ENCODE measurements at regions of chr15 and their contacts with region 1.

Region 1: GRCh38 chr15:65264863-65265430 is 21.7 kb downstream of the PARP16 start:
- DNase-seq: no peak
- ATAC-seq: no peak
- H3K4me3 ChIP-seq: no peak overlapping the region
- H3K4me3 Mint-ChIP-seq: no peak overlapping the region
- H3K27ac ChIP-seq: no peak overlapping the region
- H3K27ac Mint-ChIP-seq: no peak overlapping the region
- H3K4me1 ChIP-seq: no peaks in the 10 kb centered on the region
- H3K4me1 Mint-ChIP-seq: no peaks in the 10 kb centered on the region
- H3K27me3 ChIP-seq: no peaks in the 10 kb centered on the region
- H3K27me3 Mint-ChIP-seq: no peaks in the 10 kb centered on the region

Region 2: DNA sequence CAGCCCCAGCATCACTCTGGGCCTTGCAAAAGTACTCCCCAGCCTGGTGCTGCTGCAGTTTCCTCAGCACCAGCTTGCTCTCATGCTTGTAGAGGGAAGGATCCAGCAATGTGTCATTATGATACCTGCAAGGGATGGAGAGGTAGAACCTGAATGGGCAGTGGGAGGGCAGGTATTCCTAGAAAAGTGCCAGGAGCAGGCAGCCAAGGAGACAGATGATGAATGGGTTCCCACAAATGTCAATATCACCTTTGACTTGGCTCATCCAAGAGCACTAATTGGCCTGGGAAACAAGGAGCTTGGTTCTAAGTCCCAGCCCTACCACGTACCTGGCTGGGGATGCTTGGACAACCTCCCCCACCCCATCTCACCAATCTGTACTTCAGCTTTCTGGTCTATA is 63.0 kb before region 1 on chr15:
- CTCF ChIA-PET with region 1: no interaction called
- POLR2A ChIA-PET with region 1: interaction called in 1 of 2 experiments, 14 read pairs
- DNase-seq: no peak
- ATAC-seq: no peak
- H3K4me3 ChIP-seq: no peak overlapping the region
- H3K4me3 Mint-ChIP-seq: no peak overlapping the region
- H3K27ac ChIP-seq: no peak overlapping the region
- H3K27ac Mint-ChIP-seq: no peak overlapping the region
- H3K4me1 ChIP-seq: no peaks in the 10 kb centered on the region
- H3K4me1 Mint-ChIP-seq: no peaks in the 10 kb centered on the region
- H3K27me3 ChIP-seq: peaks cover 0 to 2% of the 10 kb centered on the region in 2 experiments
- H3K27me3 Mint-ChIP-seq: no peaks in the 10 kb centered on the region

Region 3: GRCh38 chr15:65533057-65533756 is 268.3 kb after region 1 on chr15:
- CTCF ChIA-PET with region 1: no interaction called
- POLR2A ChIA-PET with region 1: no interaction called
- DNase-seq: no peak
- ATAC-seq: no peak
- H3K4me3 ChIP-seq: no peak overlapping the region
- H3K4me3 Mint-ChIP-seq: peak overlapping the region in 2 of 3 donors; percentile 57 to 83
- H3K27ac ChIP-seq: no peak overlapping the region
- H3K27ac Mint-ChIP-seq: no peak overlapping the region
- H3K4me1 ChIP-seq: peaks cover 4 to 19% of the 10 kb centered on the region in 2 experiments
- H3K4me1 Mint-ChIP-seq: peaks cover 42 to 52% (median 45%) of the 10 kb centered on the region in 3 donors
- H3K27me3 ChIP-seq: no peaks in the 10 kb centered on the region
- H3K27me3 Mint-ChIP-seq: no peaks in the 10 kb centered on the region

Measured in T-cell (primary cell).